Ascending aorta (tissue), 2 donors: ENCODE measurements at regions of chr19 and their contacts with region 1.

Region 1: GRCh38 chr19:18281082-18282020 is at the start of gene JUND:
- DNase-seq: peak; percentile 96 to 99
- H3K4me3 ChIP-seq: peak within 1 kb of the TSS; percentile 92 to 100
- H3K27ac ChIP-seq: peak within 1 kb of the TSS; percentile 99 to 100
- H3K4me1 ChIP-seq: peaks cover 15 to 36% of the 10 kb centered on the region in 2 donors
- H3K27me3 ChIP-seq: no peaks in the 10 kb centered on the region
- CTCF ChIP-seq: peak in 1 of 3 experiments; percentile 27
- total RNA-seq, gene JUND: 3,570 TPM

Region 2: DNA sequence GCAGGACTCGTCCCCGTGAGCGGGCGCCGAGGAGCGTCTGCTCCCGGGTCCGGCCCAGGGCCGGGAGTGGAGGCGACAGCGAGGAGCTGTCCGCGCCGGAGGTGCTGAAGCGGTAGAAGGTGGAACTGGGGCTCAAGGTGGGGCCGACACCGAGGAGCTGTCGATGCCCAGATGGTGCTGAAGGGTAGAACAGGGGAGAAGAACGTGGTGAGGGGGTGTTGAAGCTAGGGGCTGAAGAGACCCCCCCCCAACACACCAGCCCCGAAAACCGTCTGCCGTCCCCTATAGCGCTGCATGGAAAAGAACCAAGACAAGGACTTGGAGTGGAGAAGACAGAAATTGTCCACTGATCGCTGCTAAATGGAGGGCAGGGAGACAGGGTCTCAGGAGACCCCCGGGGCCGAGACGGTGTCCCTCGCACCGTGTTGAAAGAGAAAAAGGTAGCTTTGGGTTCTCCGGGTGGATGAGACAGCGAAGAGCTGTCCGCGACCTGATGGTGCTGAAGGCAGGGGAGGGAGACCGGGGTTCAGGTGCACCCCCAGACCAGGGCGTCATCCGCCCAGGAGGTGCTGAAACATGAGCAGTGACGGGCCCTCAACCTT is 48.0 kb before region 1 on chr19:
- intact Hi-C with region 1: no loop called
- DNase-seq: no peak
- H3K4me3 ChIP-seq: no peak overlapping the region
- H3K27ac ChIP-seq: no peak overlapping the region
- H3K4me1 ChIP-seq: no peaks in the 10 kb centered on the region
- H3K27me3 ChIP-seq: peaks cover 9% of the 10 kb centered on the region
- CTCF ChIP-seq: no peak

Region 3: DNA sequence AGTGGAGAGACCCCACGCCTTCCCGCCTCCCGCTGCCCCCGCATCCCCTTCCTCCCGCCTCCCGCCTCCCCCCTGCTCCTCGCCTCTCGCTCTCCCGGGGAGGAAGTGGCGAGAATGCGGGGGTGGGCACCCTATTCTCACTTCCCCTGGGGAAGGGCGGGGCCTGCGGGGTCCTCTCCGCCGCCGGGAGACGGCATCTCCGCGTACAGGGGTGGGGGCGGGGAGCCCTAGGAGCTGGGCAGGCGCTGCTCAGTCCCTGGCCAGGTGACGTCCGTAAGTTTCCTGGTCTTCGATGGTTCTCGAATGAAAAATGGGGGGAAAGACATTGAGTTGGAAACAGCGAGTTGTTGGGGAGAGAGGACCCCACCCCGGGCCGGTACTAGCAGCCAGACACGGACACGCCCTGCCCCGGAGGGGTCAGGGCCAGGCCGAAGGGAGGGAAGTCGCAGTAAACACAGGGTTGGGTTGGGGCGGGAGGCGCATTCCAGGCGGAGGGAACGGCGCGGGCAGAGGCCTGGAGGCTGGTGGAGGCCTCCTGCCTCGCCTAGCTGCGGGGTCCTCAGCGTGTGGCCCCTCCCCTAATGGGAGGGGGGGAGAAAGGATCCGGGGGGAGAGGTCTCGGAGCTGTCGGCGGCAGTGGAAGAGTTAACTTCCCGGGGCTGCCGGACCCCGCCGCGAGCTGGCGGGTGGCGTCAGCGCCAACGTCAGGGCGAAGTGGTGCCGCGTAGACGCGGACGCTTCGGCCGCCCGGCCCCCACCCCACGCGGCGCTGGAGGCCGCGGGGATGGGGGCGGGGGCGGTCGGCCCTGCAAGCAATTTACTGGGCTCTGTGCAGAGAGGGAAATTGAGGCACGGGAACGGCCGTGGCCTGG is 10.5 kb after region 1 on chr19:
- intact Hi-C with region 1: loop called (anchors 1 kb)
- DNase-seq: peak; percentile 81 to 94
- H3K4me3 ChIP-seq: peak overlapping the region; percentile 72 to 86
- H3K27ac ChIP-seq: peak overlapping the region; percentile 99
- H3K4me1 ChIP-seq: peaks cover 4 to 28% of the 10 kb centered on the region in 2 donors
- H3K27me3 ChIP-seq: no peaks in the 10 kb centered on the region
- CTCF ChIP-seq: no peak

Region 4: GRCh38 chr19:18304458-18305310 is 23.3 kb after region 1 on chr19:
- intact Hi-C with region 1: loop called (anchors 1 kb)
- DNase-seq: peak; percentile 83 to 97
- H3K4me3 ChIP-seq: peak overlapping the region; percentile 60
- H3K27ac ChIP-seq: peak overlapping the region; percentile 98 to 100
- H3K4me1 ChIP-seq: peaks cover 41 to 77% of the 10 kb centered on the region in 2 donors
- H3K27me3 ChIP-seq: no peaks in the 10 kb centered on the region
- CTCF ChIP-seq: no peak

Region 5: DNA sequence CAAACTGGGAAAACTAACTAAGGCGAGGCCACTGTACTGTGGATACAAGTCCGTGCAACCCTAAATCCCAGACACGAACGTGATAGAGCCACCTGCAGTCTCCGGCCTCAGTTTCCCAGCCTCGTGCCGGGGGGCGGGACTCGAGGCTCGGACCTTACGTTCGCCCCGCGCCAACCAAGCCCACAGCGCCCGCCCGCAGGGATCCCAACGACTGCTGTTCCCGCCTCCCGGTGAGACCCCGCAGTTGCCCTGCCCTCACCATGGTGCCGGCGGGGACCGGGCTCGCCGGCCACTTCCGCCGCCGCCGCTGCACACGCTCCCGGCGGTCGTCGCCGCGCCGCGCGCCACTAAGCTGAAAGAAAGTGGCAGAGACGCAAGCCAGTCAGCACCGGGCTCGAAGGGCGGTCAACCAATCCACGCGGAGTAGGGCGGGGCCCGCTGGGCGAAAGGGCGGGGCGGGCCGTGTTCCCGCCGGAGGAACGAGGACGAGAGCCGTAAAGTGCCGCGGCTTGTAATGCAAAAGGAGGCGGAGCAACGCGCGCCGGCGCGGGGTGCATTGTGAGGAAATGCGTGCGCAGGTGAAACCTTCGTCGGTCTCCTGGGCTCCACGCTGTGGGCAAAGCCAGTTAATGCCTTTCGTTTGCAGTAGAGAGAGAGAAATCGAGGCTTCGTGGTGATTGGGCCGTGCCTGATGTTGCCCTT is 41.6 kb after region 1 on chr19 and contains the start of gene LSM4:
- intact Hi-C with region 1: loop called (anchors 1 kb)
- DNase-seq: peak; percentile 90 to 99
- H3K4me3 ChIP-seq: peak within 1 kb of the TSS; percentile 81 to 82
- H3K27ac ChIP-seq: peak within 1 kb of the TSS; percentile 89 to 91
- H3K4me1 ChIP-seq: peaks cover 4 to 19% of the 10 kb centered on the region in 2 donors
- H3K27me3 ChIP-seq: no peaks in the 10 kb centered on the region
- CTCF ChIP-seq: peak in 2 of 3 experiments; percentile 31 to 44
- total RNA-seq, gene LSM4: 62.5 TPM

Region 6: DNA sequence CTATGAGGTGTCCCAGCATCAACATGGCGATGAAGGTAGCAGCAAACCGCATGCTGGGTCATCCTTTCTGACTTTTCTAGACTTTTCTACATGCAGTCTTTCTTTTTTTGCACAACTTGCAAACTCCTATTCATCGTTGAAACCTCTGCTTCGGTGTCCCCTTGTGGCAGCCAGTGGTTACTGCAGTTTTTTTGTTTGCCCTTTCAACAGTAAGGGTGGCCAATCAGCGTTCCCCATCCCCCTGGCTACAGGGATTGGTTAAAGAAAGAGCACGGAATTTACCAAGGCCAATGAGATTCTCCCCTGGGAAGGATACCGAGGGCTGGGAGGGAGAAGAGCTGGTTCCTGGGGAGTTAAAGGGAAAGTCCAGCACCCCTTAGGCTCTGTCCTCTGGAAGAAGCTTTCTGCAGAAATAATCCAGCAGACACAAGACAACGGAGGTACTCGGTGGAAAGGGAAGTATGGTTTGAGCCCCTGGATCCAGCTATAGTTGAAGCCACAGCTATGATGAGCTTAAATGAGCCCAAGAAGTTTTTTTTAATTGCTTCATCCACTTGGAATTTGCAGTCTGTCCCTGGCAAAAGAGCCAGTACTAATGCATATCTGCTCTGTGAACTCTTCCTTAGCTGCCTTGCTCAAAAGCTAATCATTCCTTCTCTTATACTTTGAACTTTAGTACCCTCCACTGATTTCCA is 47.1 kb after region 1 on chr19:
- intact Hi-C with region 1: loop called (anchors 1 kb)
- DNase-seq: peak; percentile 79 to 97
- H3K4me3 ChIP-seq: peak overlapping the region; percentile 18 to 41
- H3K27ac ChIP-seq: peak overlapping the region; percentile 28 to 50
- H3K4me1 ChIP-seq: peaks cover 0 to 19% of the 10 kb centered on the region in 2 donors
- H3K27me3 ChIP-seq: no peaks in the 10 kb centered on the region
- CTCF ChIP-seq: peak; percentile 88 to 96 (median 92)